ENCODE measurements at regions of chr6 and their contacts with region 1.

Region 1: GRCh38 chr6:2989332-2990247 is 10.1 kb upstream of the NQO2 start:
- DNase-seq: peak; percentile 92
- H3K4me3 ChIP-seq: peak overlapping the region; percentile 67 to 82
- H3K27ac ChIP-seq: peak overlapping the region; percentile 94 to 97
- H3K4me1 ChIP-seq: peaks cover 16% of the 10 kb centered on the region
- H3K27me3 ChIP-seq: no peaks in the 10 kb centered on the region
- CTCF ChIP-seq: peak in 1 of 3 experiments; percentile 5
- POLR2A ChIP-seq: no peak

Region 2: DNA sequence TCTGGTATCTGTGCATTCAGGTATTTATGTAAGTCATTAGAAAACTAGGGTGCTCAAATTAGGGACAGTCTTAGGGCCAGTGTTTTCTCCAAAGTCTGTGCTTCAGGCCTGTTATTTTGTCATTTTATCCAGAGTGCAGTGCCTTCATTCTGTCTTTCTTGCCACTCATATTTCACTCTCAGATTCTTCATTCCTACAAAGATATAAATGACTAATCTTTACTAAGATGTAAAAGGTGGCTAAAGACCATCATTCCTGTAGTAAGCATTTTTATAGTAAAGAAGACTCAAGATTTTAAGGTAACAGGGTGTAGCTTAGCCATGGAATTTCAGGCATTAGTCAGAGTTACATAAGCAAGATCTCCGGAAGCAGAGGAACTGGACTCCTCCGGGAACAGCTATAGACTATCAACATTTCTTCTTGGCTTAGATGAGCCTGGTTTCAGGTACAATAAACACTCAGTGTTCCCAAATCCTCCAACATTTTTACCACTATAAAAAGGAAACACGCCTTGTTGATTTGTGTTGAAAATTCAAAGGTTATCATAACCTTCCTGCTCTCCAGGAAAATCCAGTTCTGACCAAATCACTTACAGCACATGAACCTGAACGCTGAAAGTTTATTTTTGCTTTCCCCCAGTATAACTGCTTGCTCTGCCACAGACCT is 171.7 kb before region 1 on chr6:
- intact Hi-C with region 1: no loop called
- DNase-seq: no peak
- H3K4me3 ChIP-seq: no peak overlapping the region
- H3K27ac ChIP-seq: peak overlapping the region in 1 of 2 donors; percentile 14
- H3K4me1 ChIP-seq: peaks cover 14% of the 10 kb centered on the region
- H3K27me3 ChIP-seq: no peaks in the 10 kb centered on the region
- CTCF ChIP-seq: no peak
- POLR2A ChIP-seq: no peak

Region 3: GRCh38 chr6:2971420-2972218 is 18.0 kb before region 1 on chr6 and contains the start of gene SERPINB6:
- intact Hi-C with region 1: loop called (anchors 2 kb)
- DNase-seq: peak; percentile 90
- H3K4me3 ChIP-seq: peak within 1 kb of the TSS; percentile 77 to 91
- H3K27ac ChIP-seq: peak within 1 kb of the TSS; percentile 94 to 100
- H3K4me1 ChIP-seq: peaks cover 15% of the 10 kb centered on the region
- H3K27me3 ChIP-seq: no peaks in the 10 kb centered on the region
- CTCF ChIP-seq: no peak
- POLR2A ChIP-seq: no peak
- total RNA-seq, gene SERPINB6: 203 to 281 TPM

Region 4: DNA sequence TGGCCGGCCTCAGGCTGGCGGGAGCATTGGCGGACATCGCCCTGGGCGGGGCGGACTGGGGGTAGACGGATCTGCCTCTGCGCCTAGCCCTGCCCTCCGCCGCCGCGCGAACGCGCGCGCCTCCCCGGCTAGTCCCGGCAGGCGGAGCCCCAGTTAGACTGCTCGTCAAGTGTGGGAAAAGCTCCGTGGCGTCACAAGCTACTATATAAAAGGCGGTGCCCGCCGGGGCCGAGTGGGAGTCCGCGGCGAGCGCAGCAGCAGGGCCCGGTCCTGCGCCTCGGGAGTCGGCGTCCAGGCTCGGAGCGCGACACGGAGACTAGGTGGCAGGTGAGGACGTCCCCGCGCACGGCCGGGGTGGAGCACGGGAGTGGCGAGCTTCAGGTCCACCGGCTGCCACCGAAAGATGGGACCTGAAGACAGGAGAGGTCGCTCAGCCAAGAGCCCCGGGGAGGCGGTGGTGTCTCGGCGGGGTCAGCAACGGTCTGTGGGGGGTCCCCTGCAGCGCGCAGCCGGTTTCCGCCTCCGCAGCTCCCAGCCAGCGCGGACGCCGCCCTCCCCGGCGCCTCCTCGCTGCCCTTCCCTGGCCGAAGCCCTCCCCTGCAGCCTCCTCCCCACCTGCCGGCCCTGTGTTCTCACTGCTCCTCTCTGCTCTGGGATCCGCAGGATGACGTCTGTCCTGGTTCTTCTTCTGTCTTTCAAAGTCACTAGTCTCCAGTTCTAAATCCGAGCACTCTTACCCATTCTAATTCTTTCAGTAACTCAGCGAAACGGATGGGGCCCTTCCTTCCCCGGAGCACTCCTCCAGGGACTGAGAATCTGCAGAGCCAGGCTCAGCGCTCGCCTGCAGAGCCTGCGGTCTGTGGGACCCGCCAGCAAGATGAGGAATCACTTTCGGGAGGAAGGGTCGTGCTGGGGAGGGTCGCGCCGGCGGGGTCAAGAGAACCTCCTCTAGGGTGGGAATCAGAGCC is 74.4 kb after region 1 on chr6:
- intact Hi-C with region 1: loop called (anchors 5 kb)
- DNase-seq: peak; percentile 95
- H3K4me3 ChIP-seq: peak overlapping the region; percentile 77 to 89
- H3K27ac ChIP-seq: peak overlapping the region; percentile 83 to 90
- H3K4me1 ChIP-seq: no peaks in the 10 kb centered on the region
- H3K27me3 ChIP-seq: no peaks in the 10 kb centered on the region
- CTCF ChIP-seq: peak in 1 of 3 experiments; percentile 10
- POLR2A ChIP-seq: peak; percentile 20

Region 5: GRCh38 chr6:3075522-3076113 is 86.0 kb after region 1 on chr6:
- intact Hi-C with region 1: no loop called
- DNase-seq: no peak
- H3K4me3 ChIP-seq: no peak overlapping the region
- H3K27ac ChIP-seq: no peak overlapping the region
- H3K4me1 ChIP-seq: peaks cover 4% of the 10 kb centered on the region
- H3K27me3 ChIP-seq: no peaks in the 10 kb centered on the region
- CTCF ChIP-seq: no peak
- POLR2A ChIP-seq: no peak